OCI-LY7 (cell line): ENCODE measurements at regions of chr19 and their contacts with region 1.

Region 1: GRCh38 chr19:38849860-38850435 is at the start of gene HNRNPL:
- DNase-seq: peak; percentile 100
- H3K4me3 ChIP-seq: peak within 1 kb of the TSS; percentile 94
- H3K27ac ChIP-seq: peak within 1 kb of the TSS; percentile 92
- H3K4me1 ChIP-seq: peaks cover 29% of the 10 kb centered on the region
- CTCF ChIP-seq: peak; percentile 42
- total RNA-seq, gene HNRNPL: 236 and 263 TPM in 2 replicates

Region 2: GRCh38 chr19:37979547-37980082 is 870.3 kb before region 1 on chr19:
- CTCF ChIA-PET with region 1: no interaction called
- POLR2A ChIA-PET with region 1: no interaction called
- intact Hi-C with region 1: loop called (anchors 5 kb)
- DNase-seq: peak; percentile 81
- H3K4me3 ChIP-seq: peak overlapping the region; percentile 56
- H3K27ac ChIP-seq: peak overlapping the region; percentile 100
- H3K4me1 ChIP-seq: peaks cover 90% of the 10 kb centered on the region
- CTCF ChIP-seq: no peak

Region 3: DNA sequence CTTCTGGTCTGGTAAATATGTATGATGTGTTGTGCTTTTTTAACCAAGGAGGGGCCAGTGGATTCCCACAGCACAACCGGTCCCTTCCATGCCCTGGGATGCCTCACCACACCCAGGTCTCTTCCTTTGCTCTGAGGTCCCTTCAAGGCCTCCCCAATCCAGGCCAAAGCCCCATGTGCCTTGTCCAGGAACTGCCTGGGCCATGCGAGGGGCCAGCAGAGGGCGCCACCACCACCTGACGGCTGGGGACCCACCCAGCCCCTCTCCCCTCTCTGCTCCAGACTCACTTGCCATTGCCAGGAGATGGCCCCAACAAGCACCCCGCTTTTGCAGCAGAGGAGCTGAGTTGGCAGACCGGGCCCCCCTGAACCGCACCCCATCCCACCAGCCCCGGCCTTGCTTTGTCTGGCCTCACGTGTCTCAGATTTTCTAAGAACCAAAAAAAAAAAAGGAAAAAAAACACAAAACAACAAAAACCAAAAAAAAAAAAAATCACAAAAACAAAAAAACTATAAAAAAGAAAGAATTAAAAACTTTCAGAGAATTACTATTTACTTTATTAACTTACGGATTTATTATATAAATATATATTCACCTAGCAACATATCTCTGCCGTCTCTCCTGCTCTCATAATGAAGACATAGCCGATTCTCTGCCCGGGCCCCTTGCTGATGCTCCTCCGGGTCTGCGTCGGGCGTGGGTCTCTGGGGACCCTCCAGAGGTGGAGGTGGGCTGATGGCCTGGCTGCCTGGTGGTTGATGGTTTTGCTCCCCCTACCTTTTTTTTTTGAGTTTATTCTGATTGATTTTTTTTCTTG is 120.1 kb before region 1 on chr19:
- CTCF ChIA-PET with region 1: no interaction called
- POLR2A ChIA-PET with region 1: no interaction called
- intact Hi-C with region 1: no loop called
- DNase-seq: peak; percentile 73
- H3K4me3 ChIP-seq: no peak overlapping the region
- H3K27ac ChIP-seq: no peak overlapping the region
- H3K4me1 ChIP-seq: peaks cover 14% of the 10 kb centered on the region
- CTCF ChIP-seq: peak; percentile 91

Region 4: DNA sequence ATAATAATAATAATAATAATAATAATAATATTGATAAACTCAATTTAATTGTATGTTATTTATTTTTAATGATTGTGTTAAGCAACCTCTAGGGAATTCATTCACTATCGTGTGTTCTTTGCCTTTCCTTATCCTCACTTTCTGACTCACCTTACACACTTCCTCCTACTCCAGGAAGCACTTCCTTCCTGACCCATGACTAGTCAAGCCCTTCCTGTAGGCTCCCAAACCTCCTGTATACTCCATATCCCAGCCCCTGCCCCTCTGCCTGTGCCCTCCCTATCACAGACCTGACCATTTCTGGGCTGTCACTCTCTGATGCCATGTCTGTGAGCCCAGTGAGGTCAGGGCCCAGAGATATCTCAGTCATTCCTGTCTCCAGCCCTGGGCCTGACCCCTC is 44.8 kb before region 1 on chr19:
- CTCF ChIA-PET with region 1: no interaction called
- POLR2A ChIA-PET with region 1: no interaction called
- intact Hi-C with region 1: no loop called
- DNase-seq: no peak
- H3K4me3 ChIP-seq: no peak overlapping the region
- H3K27ac ChIP-seq: no peak overlapping the region
- H3K4me1 ChIP-seq: peaks cover 3% of the 10 kb centered on the region
- CTCF ChIP-seq: no peak

Region 5: GRCh38 chr19:38862321-38863059 is 12.5 kb after region 1 on chr19:
- CTCF ChIA-PET with region 1: no interaction called
- POLR2A ChIA-PET with region 1: interaction called, 21 read pairs
- intact Hi-C with region 1: no loop called
- DNase-seq: no peak
- H3K4me3 ChIP-seq: no peak overlapping the region
- H3K27ac ChIP-seq: peak overlapping the region; percentile 31
- H3K4me1 ChIP-seq: peaks cover 87% of the 10 kb centered on the region
- CTCF ChIP-seq: no peak

Region 6: GRCh38 chr19:38891771-38892170 is 41.8 kb after region 1 on chr19:
- CTCF ChIA-PET with region 1: no interaction called
- POLR2A ChIA-PET with region 1: no interaction called
- intact Hi-C with region 1: loop called (anchors 5 kb)
- DNase-seq: no peak
- H3K4me3 ChIP-seq: no peak overlapping the region
- H3K27ac ChIP-seq: no peak overlapping the region
- H3K4me1 ChIP-seq: no peaks in the 10 kb centered on the region
- CTCF ChIP-seq: no peak

Region 7: GRCh38 chr19:38929929-38930775 is 80.2 kb after region 1 on chr19 and contains the start of gene SARS2:
- CTCF ChIA-PET with region 1: no interaction called
- POLR2A ChIA-PET with region 1: no interaction called
- intact Hi-C with region 1: loop called (anchors 2 kb)
- DNase-seq: peak; percentile 95
- H3K4me3 ChIP-seq: peak within 1 kb of the TSS; percentile 96
- H3K27ac ChIP-seq: peak within 1 kb of the TSS; percentile 71
- H3K4me1 ChIP-seq: peaks cover 31% of the 10 kb centered on the region
- CTCF ChIP-seq: peak; percentile 99
- total RNA-seq, gene SARS2: 29.5 and 37.7 TPM in 2 replicates